ENCODE measurements at regions of chr17 and their contacts with region 1.

Region 1: DNA sequence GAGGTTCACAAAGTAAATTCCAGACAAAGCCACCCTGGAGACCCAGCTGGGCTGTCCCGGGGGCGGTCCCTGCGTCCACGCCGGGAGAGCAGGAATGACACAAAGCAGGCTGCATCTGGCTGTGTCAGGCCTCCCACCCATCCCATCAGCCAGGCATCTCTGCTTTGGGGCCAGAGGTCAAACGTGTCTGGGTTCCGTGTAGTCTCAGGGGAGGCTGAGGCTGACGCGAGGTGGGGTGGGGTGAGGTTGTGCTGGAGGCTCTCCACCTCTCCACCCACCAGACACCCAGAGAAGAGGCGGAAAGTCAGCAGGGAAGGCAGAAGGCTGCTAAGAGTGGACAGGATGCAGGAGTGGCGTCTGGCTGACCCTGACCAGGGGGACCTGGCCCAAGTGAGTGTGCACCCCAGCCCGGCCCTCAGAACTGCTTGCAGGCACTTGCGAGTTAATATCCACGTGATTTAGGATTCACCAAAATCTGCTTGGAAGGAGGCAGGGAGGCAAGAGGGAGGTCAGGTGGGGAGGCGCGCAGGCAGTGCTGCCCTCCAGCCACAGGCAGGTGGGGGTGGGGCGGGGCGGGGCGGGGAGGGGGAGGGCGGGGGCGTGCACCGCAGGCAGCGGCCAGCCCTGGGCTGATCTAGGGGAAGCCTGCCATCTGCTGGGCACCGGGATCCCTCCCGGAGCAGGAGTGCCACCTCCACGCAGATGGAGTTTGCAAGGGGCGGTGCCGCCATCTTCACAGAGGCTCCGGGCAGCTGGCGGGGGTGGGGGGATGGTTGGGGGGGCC is 44.3 kb downstream of the TBC1D16 start:
- DNase-seq: peak; percentile 77 to 87
- H3K4me3 ChIP-seq: peak overlapping the region; percentile 16 to 58 (median 38)
- H3K27ac ChIP-seq: peak overlapping the region in 1 of 2 donors; percentile 73
- H3K4me1 ChIP-seq: peaks cover 4 to 31% of the 10 kb centered on the region in 2 donors
- H3K27me3 ChIP-seq: no peaks in the 10 kb centered on the region
- CTCF ChIP-seq: no peak
- POLR2A ChIP-seq: no peak

Region 2: GRCh38 chr17:79461041-79461440 is 530.3 kb before region 1 on chr17:
- intact Hi-C with region 1: loop called (anchors 5 kb)
- DNase-seq: no peak
- H3K4me3 ChIP-seq: no peak overlapping the region
- H3K27ac ChIP-seq: no peak overlapping the region
- H3K4me1 ChIP-seq: no peaks in the 10 kb centered on the region
- H3K27me3 ChIP-seq: peaks cover 0 to 32% of the 10 kb centered on the region in 2 donors
- CTCF ChIP-seq: no peak
- POLR2A ChIP-seq: no peak

Region 3: DNA sequence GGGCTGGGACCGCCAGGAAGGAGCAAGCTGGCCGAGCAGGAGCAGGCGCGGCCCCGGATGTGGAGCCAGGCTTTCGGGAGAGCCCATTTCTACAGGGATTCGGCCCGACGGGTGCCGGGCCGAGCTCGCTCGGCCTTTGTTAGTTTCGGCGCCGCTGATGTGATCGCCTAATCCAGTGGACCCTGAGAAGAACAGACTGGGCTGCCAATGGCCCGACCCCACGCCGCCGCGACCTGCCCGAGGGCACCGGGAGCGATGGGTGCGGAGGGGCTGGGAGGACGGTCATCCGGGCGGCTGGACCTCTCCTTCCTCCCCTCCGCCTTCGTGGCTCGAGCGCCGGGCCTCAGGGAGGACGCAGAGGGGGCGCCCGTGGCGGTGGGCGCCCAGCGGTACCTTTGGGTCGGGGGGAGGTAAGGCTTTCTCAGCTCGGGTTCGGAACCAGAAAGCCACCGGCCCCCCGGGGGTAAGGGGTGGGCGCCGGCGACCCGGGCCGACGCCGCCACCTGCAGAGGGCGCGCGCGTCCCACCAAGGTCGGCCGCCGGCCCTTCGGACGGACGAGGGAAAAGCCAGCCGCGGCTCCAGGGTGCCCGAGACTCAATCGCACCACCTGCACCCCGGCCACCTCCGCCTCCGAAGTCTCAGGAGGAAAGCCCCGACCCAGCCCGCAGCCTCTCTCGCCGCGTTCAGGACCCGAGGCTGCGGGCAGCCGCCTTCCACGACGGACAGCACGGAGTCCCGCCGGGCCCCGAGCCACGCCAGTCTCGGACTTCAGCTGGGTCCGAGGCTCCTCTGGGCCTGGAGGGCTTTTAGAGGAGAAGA is 201.6 kb before region 1 on chr17:
- intact Hi-C with region 1: loop called (anchors 2 kb)
- DNase-seq: no peak
- H3K4me3 ChIP-seq: peak overlapping the region in 2 of 3 donors; percentile 18 to 57
- H3K27ac ChIP-seq: no peak overlapping the region
- H3K4me1 ChIP-seq: peaks cover 0 to 5% of the 10 kb centered on the region in 2 donors
- H3K27me3 ChIP-seq: peaks cover 20 to 56% of the 10 kb centered on the region in 2 donors
- CTCF ChIP-seq: peak; percentile 5 to 72 (median 55)
- POLR2A ChIP-seq: no peak

Measured in breast epithelium (tissue), 4 donors.